ENCODE measurements at regions of chr4 and their contacts with region 1.

Region 1: GRCh38 chr4:167021545-167022155 is 212.6 kb downstream of the SPOCK3 start:
- DNase-seq: peak; percentile 67
- H3K4me3 Mint-ChIP-seq: no peak overlapping the region
- H3K27ac Mint-ChIP-seq: no peak overlapping the region
- H3K4me1 Mint-ChIP-seq: no peaks in the 10 kb centered on the region
- H3K27me3 Mint-ChIP-seq: no peaks in the 10 kb centered on the region

Region 2: DNA sequence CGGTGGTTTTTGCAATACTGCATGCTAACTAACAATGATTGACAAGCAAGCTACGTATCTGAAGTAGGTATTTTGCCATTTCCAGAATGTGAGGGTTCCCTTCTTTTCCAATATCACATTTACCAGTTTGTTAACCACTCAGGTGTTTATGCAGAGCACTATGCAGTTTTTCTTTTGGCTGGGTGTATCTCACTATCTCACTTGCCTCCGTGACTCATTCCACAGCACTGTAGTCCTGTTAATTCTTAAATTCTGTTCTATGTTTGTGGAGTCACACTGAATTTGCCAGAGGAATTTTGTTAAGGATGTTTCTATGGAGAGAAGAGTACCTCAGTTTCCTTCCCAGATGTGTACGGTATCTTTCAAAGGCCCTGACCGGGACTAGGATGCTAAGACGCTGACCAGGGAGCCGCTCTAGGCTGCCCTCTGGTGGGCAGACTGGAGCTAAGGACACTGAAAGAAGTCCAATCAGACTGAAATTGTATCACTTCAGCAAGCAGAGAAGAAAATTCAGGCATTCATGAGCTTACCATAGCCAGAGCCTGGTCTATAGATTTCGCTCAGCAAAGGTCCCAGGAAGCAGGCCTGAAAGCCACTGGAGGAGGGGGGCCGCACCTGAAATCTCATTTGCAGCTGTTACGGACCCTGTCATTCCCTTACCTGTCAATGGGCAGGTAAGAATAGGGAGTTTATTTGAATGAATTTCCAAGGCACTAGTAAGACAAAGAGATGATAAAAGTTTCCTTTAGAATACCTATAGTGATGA is 601.0 kb after region 1 on chr4:
- CTCF ChIA-PET with region 1: interaction called, 3 read pairs
- POLR2A ChIA-PET with region 1: no interaction called
- intact Hi-C with region 1: loop called (anchors 2 kb)
- DNase-seq: peak; percentile 43
- H3K4me3 Mint-ChIP-seq: no peak overlapping the region
- H3K27ac Mint-ChIP-seq: no peak overlapping the region
- H3K4me1 Mint-ChIP-seq: no peaks in the 10 kb centered on the region
- H3K27me3 Mint-ChIP-seq: no peaks in the 10 kb centered on the region

Region 3: GRCh38 chr4:168153596-168154440 is 1132.2 kb after region 1 on chr4:
- CTCF ChIA-PET with region 1: interaction called, 9 read pairs
- POLR2A ChIA-PET with region 1: no interaction called
- intact Hi-C with region 1: loop called (anchors 1 kb)
- DNase-seq: peak; percentile 65
- H3K4me3 Mint-ChIP-seq: no peak overlapping the region
- H3K27ac Mint-ChIP-seq: no peak overlapping the region
- H3K4me1 Mint-ChIP-seq: peaks cover 6% of the 10 kb centered on the region
- H3K27me3 Mint-ChIP-seq: peaks cover 1% of the 10 kb centered on the region